ENCODE measurements at regions of chr5 and their contacts with region 1.

Region 1: GRCh38 chr5:72770266-72770665 is 46.2 kb upstream of the TNPO1 start:
- DNase-seq: no peak

Region 2: GRCh38 chr5:72785801-72786200 is 15.5 kb after region 1 on chr5:
- intact Hi-C with region 1: loop called in 1 of 2 experiments (anchors 1 kb)
- DNase-seq: no peak

Measured in posterior vena cava (tissue), 2 donors.